ENCODE measurements at regions of chr11 and their contacts with region 1.

Region 1: GRCh38 chr11:57530596-57531507 is at the start of gene TIMM10:
- DNase-seq: peak; percentile 71 to 98 (median 95)
- ATAC-seq: peak; percentile 95
- H3K4me3 ChIP-seq: peak within 1 kb of the TSS; percentile 73
- H3K4me3 Mint-ChIP-seq: peak within 1 kb of the TSS; percentile 86 to 95 (median 91)
- H3K27ac ChIP-seq: peak within 1 kb of the TSS; percentile 91
- H3K27ac Mint-ChIP-seq: peak within 1 kb of the TSS; percentile 87 to 98 (median 95)
- H3K4me1 ChIP-seq: peaks cover 15 to 17% of the 10 kb centered on the region in 2 donors
- H3K4me1 Mint-ChIP-seq: peaks cover 6 to 43% (median 33%) of the 10 kb centered on the region in 7 donors
- H3K27me3 ChIP-seq: no peaks in the 10 kb centered on the region
- H3K27me3 Mint-ChIP-seq: no peaks in the 10 kb centered on the region
- total RNA-seq, gene TIMM10: 23.7 to 52.8 (median 34.7) TPM

Region 2: GRCh38 chr11:57426929-57427726 is 103.7 kb before region 1 on chr11 and contains the start of gene SLC43A3:
- CTCF ChIA-PET with region 1: interaction called, 3 read pairs
- POLR2A ChIA-PET with region 1: no interaction called
- intact Hi-C with region 1: loop called (anchors 1 kb)
- DNase-seq: peak; percentile 18 to 79 (median 38)
- ATAC-seq: peak; percentile 63
- H3K4me3 ChIP-seq: peak within 1 kb of the TSS; percentile 56
- H3K4me3 Mint-ChIP-seq: peak within 1 kb of the TSS; percentile 83 to 92 (median 89)
- H3K27ac ChIP-seq: peak within 1 kb of the TSS; percentile 62
- H3K27ac Mint-ChIP-seq: peak within 1 kb of the TSS; percentile 52 to 93 (median 82)
- H3K4me1 ChIP-seq: peaks cover 24 to 36% of the 10 kb centered on the region in 2 donors
- H3K4me1 Mint-ChIP-seq: peaks cover 40 to 55% (median 50%) of the 10 kb centered on the region in 7 donors
- H3K27me3 ChIP-seq: no peaks in the 10 kb centered on the region
- H3K27me3 Mint-ChIP-seq: peaks cover 0 to 24% (median 0%) of the 10 kb centered on the region in 5 donors
- total RNA-seq, gene SLC43A3: 10.5 to 67.9 (median 12.2) TPM

Region 3: DNA sequence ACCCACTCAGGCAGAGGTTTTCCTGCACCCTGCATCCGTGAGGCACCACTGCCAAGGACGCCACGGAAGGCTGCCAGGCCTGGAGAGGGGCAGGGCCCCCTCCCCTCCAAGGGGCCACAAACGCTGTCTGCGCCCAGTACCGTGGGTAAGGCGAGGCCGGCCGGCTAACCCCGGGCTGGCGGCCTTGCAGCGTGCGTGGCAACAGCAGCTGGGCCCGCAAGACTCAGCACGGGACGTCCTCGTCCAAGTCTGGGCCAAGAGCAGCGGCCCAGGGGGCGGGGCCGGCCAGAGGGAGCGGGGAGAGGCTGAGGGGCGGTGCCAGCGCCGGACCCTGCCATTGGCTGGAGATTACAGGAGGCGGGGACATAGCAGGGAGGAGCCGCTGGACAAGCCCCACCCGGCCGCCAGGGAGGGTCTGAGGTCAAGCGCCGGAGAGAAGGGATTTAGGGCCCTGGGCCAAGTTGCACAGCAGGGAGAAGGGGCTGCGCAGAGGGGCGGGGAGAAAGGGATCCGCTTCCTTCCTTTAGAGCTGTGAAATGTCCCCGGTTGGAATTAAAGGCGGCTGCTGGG is 31.4 kb before region 1 on chr11:
- CTCF ChIA-PET with region 1: interaction called, 286 read pairs
- POLR2A ChIA-PET with region 1: interaction called, 4 read pairs
- intact Hi-C with region 1: no loop called
- DNase-seq: peak in 2 of 9 donors; percentile 26 to 62
- ATAC-seq: peak; percentile 93
- H3K4me3 ChIP-seq: no peak overlapping the region
- H3K4me3 Mint-ChIP-seq: peak overlapping the region in 4 of 10 donors; percentile 1 to 57 (median 25)
- H3K27ac ChIP-seq: no peak overlapping the region
- H3K27ac Mint-ChIP-seq: no peak overlapping the region
- H3K4me1 ChIP-seq: no peaks in the 10 kb centered on the region
- H3K4me1 Mint-ChIP-seq: peaks cover 0 to 7% (median 6%) of the 10 kb centered on the region in 7 donors
- H3K27me3 ChIP-seq: no peaks in the 10 kb centered on the region
- H3K27me3 Mint-ChIP-seq: no peaks in the 10 kb centered on the region

Region 4: GRCh38 chr11:57574061-57574460 is 43.2 kb after region 1 on chr11:
- CTCF ChIA-PET with region 1: no interaction called
- POLR2A ChIA-PET with region 1: no interaction called
- intact Hi-C with region 1: no loop called
- DNase-seq: no peak
- ATAC-seq: no peak
- H3K4me3 ChIP-seq: no peak overlapping the region
- H3K4me3 Mint-ChIP-seq: no peak overlapping the region
- H3K27ac ChIP-seq: no peak overlapping the region
- H3K27ac Mint-ChIP-seq: peak overlapping the region in 1 of 9 donors; percentile 28
- H3K4me1 ChIP-seq: peaks cover 0 to 7% of the 10 kb centered on the region in 2 donors
- H3K4me1 Mint-ChIP-seq: peaks cover 4 to 21% (median 14%) of the 10 kb centered on the region in 7 donors
- H3K27me3 ChIP-seq: no peaks in the 10 kb centered on the region
- H3K27me3 Mint-ChIP-seq: peaks cover 0 to 24% (median 5%) of the 10 kb centered on the region in 5 donors

Region 5: GRCh38 chr11:57644748-57645688 is 114.2 kb after region 1 on chr11:
- CTCF ChIA-PET with region 1: interaction called, 7 read pairs
- POLR2A ChIA-PET with region 1: interaction called, 7 read pairs
- intact Hi-C with region 1: loop called (anchors 1 to 2 kb)
- DNase-seq: peak; percentile 61 to 91 (median 85)
- ATAC-seq: peak; percentile 87
- H3K4me3 ChIP-seq: no peak overlapping the region
- H3K4me3 Mint-ChIP-seq: no peak overlapping the region
- H3K27ac ChIP-seq: no peak overlapping the region
- H3K27ac Mint-ChIP-seq: peak overlapping the region in 2 of 9 donors; percentile 36 to 56
- H3K4me1 ChIP-seq: peaks cover 11 to 14% of the 10 kb centered on the region in 2 donors
- H3K4me1 Mint-ChIP-seq: peaks cover 25 to 60% (median 41%) of the 10 kb centered on the region in 7 donors
- H3K27me3 ChIP-seq: peaks cover 10 to 18% of the 10 kb centered on the region in 2 donors
- H3K27me3 Mint-ChIP-seq: peaks cover 30 to 60% (median 47%) of the 10 kb centered on the region in 5 donors

Region 6: DNA sequence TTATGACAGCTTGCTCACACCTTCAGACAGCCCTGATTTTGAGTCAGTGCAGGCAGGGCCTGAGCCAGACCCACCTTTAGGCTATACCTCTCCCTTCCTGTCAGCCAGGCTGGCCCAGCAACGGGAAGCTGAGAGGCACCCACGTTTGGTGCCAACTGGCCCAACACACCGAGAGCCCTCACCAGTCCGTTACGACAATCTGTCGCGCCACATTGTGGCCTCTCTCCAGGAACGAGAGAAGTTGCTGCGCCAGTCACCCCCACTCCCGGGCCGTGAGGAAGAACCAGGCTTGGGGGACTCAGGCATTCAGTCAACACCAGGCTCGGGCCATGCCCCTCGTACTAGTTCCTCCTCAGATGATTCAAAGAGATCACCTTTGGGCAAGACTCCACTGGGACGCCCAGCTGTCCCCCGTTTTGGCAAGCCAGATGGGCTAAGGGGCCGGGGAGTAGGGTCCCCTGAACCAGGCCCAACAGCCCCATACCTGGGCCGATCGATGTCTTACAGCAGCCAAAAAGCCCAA is 168.1 kb after region 1 on chr11:
- CTCF ChIA-PET with region 1: no interaction called
- POLR2A ChIA-PET with region 1: no interaction called
- intact Hi-C with region 1: no loop called
- DNase-seq: no peak
- ATAC-seq: peak; percentile 34
- H3K4me3 ChIP-seq: no peak overlapping the region
- H3K4me3 Mint-ChIP-seq: no peak overlapping the region
- H3K27ac ChIP-seq: no peak overlapping the region
- H3K27ac Mint-ChIP-seq: no peak overlapping the region
- H3K4me1 ChIP-seq: no peaks in the 10 kb centered on the region
- H3K4me1 Mint-ChIP-seq: no peaks in the 10 kb centered on the region
- H3K27me3 ChIP-seq: no peaks in the 10 kb centered on the region
- H3K27me3 Mint-ChIP-seq: no peaks in the 10 kb centered on the region

Region 7: DNA sequence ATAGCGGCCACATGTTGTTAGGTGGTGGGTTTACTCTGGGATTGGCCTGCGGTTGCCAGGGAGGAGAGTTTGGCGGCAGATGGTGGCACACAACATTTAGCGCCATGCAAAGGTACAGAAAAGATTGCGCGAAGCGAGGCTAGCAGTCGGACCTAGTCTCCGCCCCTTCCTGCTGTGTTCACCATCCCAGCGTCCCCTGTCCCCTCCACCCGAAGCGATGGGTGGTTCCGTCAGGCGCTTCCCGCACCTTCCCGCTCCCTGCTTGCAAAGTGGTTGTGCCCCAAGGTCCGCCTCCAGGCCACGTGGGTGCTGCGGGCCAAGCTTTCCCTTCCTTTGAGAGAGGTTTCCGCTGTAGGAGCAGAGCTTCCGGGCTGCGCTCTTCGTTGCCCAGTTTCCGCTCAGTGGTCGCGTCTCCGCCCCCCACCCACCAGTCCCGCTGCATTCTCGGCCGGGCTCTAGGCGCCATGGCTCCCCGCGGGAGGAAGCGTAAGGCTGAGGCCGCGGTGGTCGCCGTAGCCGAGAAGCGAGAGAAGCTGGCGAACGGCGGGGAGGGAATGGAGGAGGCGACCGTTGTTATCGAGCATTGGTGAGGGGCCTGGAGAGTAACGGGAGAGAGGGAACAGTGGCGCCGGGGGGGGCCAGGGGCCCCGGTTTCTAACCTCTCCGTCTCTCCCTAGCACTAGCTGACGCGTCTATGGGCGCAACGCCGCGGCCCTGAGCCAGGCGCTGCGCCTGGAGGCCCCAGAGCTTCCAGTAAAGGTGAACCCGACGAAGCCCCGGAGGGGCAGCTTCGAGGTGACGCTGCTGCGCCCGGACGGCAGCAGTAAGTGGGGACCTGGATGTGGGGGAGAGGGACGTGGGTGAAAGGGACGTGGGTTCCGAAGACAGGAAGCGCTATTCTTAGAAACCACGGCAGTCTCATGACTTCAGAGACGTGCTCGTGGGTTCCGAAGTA is 210.6 kb after region 1 on chr11 and contains the start of gene SELENOH:
- CTCF ChIA-PET with region 1: no interaction called
- POLR2A ChIA-PET with region 1: no interaction called
- intact Hi-C with region 1: loop called (anchors 1 kb)
- DNase-seq: peak; percentile 75 to 96 (median 91)
- ATAC-seq: peak; percentile 94
- H3K4me3 ChIP-seq: peak within 1 kb of the TSS; percentile 86
- H3K4me3 Mint-ChIP-seq: peak within 1 kb of the TSS; percentile 90 to 100 (median 99)
- H3K27ac ChIP-seq: peak within 1 kb of the TSS; percentile 93
- H3K27ac Mint-ChIP-seq: peak within 1 kb of the TSS; percentile 97 to 100 (median 98)
- H3K4me1 ChIP-seq: peaks cover 16 to 23% of the 10 kb centered on the region in 2 donors
- H3K4me1 Mint-ChIP-seq: peaks cover 12 to 50% (median 41%) of the 10 kb centered on the region in 7 donors
- H3K27me3 ChIP-seq: no peaks in the 10 kb centered on the region
- H3K27me3 Mint-ChIP-seq: no peaks in the 10 kb centered on the region
- total RNA-seq, gene SELENOH: 93.6 to 193 (median 124) TPM